BJ (cell line): ENCODE measurements at regions of chr11 and their contacts with region 1.

Region 1: GRCh38 chr11:64419818-64420485 is 61.0 kb downstream of the RPS6KA4 start:
- DNase-seq: no peak
- H3K4me3 ChIP-seq: no peak overlapping the region
- H3K27me3 ChIP-seq: no peaks in the 10 kb centered on the region; the same call in 1 of the 2 replicates
- CTCF ChIP-seq: no peak

Region 2: GRCh38 chr11:64120951-64121569 is 298.9 kb before region 1 on chr11:
- CTCF ChIA-PET with region 1: no interaction called
- POLR2A ChIA-PET with region 1: no interaction called
- DNase-seq: no peak
- H3K4me3 ChIP-seq: no peak overlapping the region
- H3K27me3 ChIP-seq: no peaks in the 10 kb centered on the region; the same call in 1 of the 2 replicates
- CTCF ChIP-seq: no peak

Region 3: DNA sequence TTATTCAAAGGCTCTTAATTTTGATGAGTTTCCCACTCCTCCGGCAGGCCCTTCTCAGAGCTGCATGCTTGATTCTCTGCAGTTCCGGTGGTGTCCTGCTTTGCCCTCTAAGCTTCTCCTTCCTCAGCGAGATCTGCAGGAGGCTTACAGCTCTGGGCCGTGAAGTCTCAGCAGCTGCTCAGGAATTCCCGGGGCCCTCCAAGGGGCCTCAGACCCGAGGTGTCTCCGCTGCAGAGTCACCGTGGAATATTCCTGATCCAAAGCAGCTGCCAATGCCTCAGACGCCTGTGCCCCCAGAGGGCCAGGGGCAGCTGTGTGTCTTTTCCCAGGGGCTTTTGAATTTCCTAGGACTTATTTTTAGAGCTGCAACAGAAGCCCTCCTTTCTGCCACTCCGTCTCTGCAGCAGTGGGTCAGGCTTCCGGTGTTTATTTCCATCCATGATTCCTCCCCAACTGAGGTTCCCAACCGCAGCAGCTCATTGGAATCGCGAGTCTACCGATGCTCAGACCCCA is 23.8 kb before region 1 on chr11:
- CTCF ChIA-PET with region 1: no interaction called
- POLR2A ChIA-PET with region 1: interaction called, 10 read pairs
- DNase-seq: no peak
- H3K4me3 ChIP-seq: no peak overlapping the region
- H3K27me3 ChIP-seq: peaks cover 2% of the 10 kb centered on the region; the same call in 1 of the 2 replicates
- CTCF ChIP-seq: no peak

Region 4: DNA sequence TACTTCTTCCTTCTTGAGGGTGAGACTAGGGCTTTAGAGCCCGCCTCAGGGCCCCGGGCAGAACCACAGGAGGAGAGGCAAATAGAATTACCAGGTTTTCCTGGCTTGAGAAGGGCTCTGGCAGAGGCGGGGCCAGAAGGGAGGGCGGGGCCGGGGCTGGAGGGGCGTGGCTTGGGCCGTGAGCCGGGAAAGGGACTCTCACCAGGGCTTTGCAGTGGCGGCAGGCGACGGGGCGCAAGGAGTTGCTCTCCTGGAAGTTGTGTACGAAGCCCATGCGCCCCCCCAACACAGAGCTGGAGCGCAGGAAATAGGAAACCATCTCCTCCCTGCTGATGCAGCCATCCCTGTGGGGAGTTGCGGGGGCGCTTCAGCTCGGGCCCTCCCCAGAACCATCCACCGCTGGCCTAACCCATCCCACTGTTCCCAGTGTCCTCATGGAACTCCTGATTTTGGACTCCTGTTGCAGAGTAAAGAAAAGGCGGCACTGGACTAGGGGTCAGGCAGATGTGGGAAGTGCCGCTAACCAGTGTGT is 310.0 kb after region 1 on chr11:
- CTCF ChIA-PET with region 1: no interaction called
- POLR2A ChIA-PET with region 1: no interaction called
- DNase-seq: no peak
- H3K4me3 ChIP-seq: no peak overlapping the region
- H3K27me3 ChIP-seq: peaks cover 17% of the 10 kb centered on the region
- CTCF ChIP-seq: no peak